ENCODE measurements at regions of chr1 and their contacts with region 1.

Region 1: GRCh38 chr1:2545759-2546514 is 10.2 kb upstream of the TNFRSF14 start:
- DNase-seq: peak; percentile 89 to 92 (median 90)
- H3K4me3 ChIP-seq: peak overlapping the region; percentile 78 to 80
- H3K4me3 Mint-ChIP-seq: peak overlapping the region; percentile 43 to 97 (median 92)
- H3K27ac ChIP-seq: peak overlapping the region; percentile 98
- H3K27ac Mint-ChIP-seq: peak overlapping the region in 6 of 7 donors; percentile 9 to 99 (median 97)
- H3K4me1 ChIP-seq: peaks cover 48% of the 10 kb centered on the region
- H3K4me1 Mint-ChIP-seq: peaks cover 8 to 39% (median 20%) of the 10 kb centered on the region in 4 donors
- H3K27me3 ChIP-seq: no peaks in the 10 kb centered on the region
- H3K27me3 Mint-ChIP-seq: peaks cover 0 to 1% of the 10 kb centered on the region in 2 donors

Region 2: DNA sequence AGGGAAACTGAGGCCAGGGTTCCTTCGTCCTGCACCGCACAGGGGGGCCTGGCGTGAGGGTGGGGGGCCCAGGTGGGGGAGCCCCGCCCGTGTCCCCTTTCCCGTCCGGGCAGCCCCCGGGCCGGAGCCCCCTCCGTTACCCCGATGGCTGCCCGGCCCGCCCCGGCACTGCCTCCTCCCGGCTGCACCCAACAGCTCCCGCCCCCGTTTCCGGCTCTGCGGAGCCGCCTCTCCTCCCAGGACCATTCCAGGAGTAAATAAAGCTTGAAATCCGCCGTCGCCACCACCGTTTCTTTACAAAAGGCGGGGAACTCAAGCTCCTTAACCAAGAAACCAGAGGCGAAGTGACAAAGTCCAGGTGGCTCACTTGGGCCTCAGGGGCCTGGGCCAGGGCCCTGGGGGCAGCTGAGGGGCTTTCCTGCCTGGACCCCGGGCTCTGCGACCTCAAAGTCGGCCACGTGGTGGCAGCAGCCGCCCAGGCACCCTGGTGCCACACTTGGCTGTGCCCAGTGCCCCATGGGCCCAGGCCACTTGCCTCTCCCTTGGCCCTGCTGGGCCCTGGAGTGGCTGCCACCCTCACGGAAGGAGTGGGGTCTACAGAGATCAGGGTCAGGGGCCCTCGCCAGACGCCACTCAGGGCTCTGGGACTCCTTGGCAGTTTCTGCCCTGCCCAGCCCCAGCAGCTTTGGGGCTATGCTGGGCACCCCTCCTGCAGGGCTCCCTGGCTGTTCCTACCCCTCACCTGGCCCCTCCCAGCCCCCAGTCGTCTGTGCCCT is 350.9 kb before region 1 on chr1:
- CTCF ChIA-PET with region 1: interaction called, 23 read pairs
- POLR2A ChIA-PET with region 1: interaction called, 10 read pairs
- intact Hi-C with region 1: loop called (anchors 1 kb)
- DNase-seq: peak; percentile 91 to 98 (median 94)
- H3K4me3 ChIP-seq: peak overlapping the region; percentile 57 to 68
- H3K4me3 Mint-ChIP-seq: peak overlapping the region; percentile 82 to 94 (median 84)
- H3K27ac ChIP-seq: peak overlapping the region; percentile 64
- H3K27ac Mint-ChIP-seq: peak overlapping the region; percentile 87 to 97 (median 92)
- H3K4me1 ChIP-seq: peaks cover 49% of the 10 kb centered on the region
- H3K4me1 Mint-ChIP-seq: peaks cover 8 to 43% (median 24%) of the 10 kb centered on the region in 4 donors
- H3K27me3 ChIP-seq: no peaks in the 10 kb centered on the region
- H3K27me3 Mint-ChIP-seq: no peaks in the 10 kb centered on the region

Region 3: DNA sequence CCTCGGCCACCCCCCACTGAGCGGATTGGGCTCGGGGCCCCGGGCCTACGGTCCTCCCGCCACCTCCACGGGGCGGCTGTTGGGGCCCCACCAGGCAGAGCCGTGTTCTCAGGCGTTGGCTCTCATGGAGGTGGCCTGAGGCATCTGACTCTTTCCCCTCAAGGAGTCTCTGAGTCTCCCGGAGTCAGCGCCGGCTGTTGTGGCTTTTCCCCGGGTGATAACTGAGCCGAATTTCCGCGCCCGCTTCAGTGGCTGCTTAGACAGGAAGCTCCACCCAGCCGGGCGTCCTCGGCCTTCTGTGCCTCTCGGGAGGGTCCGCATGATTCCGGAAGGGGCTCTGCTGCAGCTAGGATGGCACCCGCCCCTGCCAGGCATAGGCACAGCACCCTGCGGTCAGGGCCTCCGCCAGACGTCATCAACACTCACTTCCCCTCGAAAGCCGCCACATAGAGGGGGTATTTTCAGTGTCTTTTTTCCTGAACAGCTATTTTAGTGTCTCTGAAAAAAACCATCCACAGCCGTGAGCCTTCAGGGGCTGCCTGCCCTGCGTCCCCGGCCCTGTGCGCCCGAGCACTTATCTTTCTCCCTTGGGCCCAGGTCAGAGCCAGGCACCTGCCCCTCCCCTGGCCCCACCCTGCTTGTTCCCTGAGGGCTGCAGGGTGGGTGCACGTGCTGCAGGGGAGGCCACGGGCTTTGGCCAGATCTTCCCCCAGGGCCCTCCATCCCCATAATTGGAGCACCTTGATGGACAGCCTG is 244.9 kb before region 1 on chr1:
- CTCF ChIA-PET with region 1: no interaction called
- POLR2A ChIA-PET with region 1: no interaction called
- intact Hi-C with region 1: loop called (anchors 10 kb)
- DNase-seq: peak; percentile 96 to 99 (median 97)
- H3K4me3 ChIP-seq: peak overlapping the region; percentile 47 to 57
- H3K4me3 Mint-ChIP-seq: peak overlapping the region; percentile 77 to 92 (median 86)
- H3K27ac ChIP-seq: peak overlapping the region; percentile 96
- H3K27ac Mint-ChIP-seq: peak overlapping the region; percentile 99 to 100 (median 99)
- H3K4me1 ChIP-seq: peaks cover 67% of the 10 kb centered on the region
- H3K4me1 Mint-ChIP-seq: peaks cover 15 to 71% (median 46%) of the 10 kb centered on the region in 4 donors
- H3K27me3 ChIP-seq: no peaks in the 10 kb centered on the region
- H3K27me3 Mint-ChIP-seq: no peaks in the 10 kb centered on the region

Region 4: DNA sequence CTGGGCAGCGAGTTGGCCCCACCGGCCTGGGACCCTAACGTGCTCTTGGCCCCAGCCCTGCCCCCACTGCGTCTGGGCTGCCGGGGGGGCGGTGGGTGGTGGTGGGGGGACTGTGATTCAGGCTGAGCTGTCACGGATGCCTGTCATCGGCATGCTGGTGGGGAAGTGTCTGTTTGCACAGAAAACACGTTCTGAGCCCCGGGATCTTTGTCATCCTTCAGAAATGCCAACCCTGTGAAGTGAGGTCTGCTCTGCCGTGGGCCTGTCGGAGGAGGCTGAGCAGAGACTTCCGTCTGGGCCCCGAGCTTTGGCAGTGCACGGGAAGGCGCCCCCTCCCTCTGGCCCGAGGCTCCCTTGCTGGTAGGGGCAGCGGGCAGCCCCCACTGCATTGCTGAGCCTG is 94.2 kb before region 1 on chr1:
- CTCF ChIA-PET with region 1: no interaction called
- POLR2A ChIA-PET with region 1: no interaction called
- intact Hi-C with region 1: no loop called
- DNase-seq: no peak
- H3K4me3 ChIP-seq: no peak overlapping the region
- H3K4me3 Mint-ChIP-seq: no peak overlapping the region
- H3K27ac ChIP-seq: no peak overlapping the region
- H3K27ac Mint-ChIP-seq: no peak overlapping the region
- H3K4me1 ChIP-seq: no peaks in the 10 kb centered on the region
- H3K4me1 Mint-ChIP-seq: peaks cover 0 to 1% (median 0%) of the 10 kb centered on the region in 4 donors
- H3K27me3 ChIP-seq: no peaks in the 10 kb centered on the region
- H3K27me3 Mint-ChIP-seq: no peaks in the 10 kb centered on the region

Region 5: DNA sequence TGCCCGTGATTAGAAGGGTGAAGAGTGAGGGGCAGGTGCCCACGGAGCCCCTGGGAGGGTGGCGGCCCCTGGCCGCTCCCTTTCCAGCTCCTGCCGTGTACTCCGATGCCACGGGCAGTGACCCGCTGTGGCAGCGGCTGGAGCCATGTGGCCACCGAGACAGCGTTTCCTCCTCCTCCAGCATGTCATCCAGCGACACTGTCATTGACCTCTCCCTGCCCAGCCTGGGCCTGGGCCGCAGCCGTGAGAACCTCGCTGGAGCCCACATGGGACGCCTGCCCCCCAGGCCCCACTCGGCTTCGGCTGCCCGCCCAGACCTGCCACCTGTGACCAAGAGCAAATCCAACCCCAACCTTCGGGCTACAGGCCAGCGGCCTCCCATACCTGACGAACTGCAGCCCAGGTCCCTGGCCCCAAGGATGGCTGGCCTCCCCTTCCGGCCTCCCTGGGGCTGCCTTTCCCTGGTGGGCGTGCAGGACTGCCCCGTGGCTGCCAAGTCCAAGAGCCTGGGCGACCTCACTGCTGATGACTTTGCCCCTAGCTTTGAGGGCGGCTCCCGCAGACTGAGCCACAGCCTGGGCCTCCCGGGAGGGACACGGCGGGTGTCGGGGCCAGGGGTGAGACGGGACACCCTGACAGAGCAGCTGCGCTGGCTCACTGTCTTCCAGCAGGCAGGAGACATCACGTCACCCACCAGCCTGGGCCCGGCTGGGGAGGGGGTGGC is 41.5 kb before region 1 on chr1:
- CTCF ChIA-PET with region 1: no interaction called
- POLR2A ChIA-PET with region 1: interaction called, 12 read pairs
- intact Hi-C with region 1: no loop called
- DNase-seq: no peak
- H3K4me3 ChIP-seq: no peak overlapping the region
- H3K4me3 Mint-ChIP-seq: no peak overlapping the region
- H3K27ac ChIP-seq: no peak overlapping the region
- H3K27ac Mint-ChIP-seq: no peak overlapping the region
- H3K4me1 ChIP-seq: peaks cover 11% of the 10 kb centered on the region
- H3K4me1 Mint-ChIP-seq: peaks cover 5 to 13% (median 8%) of the 10 kb centered on the region in 4 donors
- H3K27me3 ChIP-seq: no peaks in the 10 kb centered on the region
- H3K27me3 Mint-ChIP-seq: no peaks in the 10 kb centered on the region

Region 6: DNA sequence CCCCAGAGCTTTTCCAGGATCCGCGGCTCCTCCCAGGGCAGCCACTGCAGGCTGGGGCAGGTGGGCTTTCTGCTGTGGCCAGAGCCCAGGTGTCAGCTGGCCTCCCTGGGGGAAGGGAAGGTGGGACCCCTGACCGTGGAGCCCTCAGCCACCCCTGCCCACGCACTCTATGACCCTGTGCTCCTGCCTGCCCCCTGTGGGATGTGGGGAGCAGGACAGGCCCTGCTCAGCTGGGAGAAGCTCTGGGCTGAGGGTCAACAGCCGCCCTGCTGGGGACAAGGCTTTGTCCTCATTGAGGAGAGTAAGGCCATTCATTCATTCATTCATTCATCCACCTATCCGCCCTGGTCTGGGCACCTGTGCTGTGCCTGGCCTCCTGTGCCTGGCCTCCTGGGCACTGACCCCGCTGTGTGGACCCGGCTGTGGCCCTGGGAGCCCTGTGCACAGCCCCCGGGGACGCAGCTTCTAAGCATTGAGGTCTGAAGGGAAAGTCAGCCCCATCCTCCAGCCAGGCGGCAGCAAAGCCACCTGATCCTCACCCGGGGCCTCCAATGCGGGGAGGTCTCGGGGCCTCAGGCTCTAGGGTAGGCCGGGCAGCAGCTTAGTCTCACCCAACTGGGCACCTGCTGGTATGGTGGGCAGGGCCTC is 16.1 kb after region 1 on chr1:
- CTCF ChIA-PET with region 1: interaction called, 18 read pairs
- POLR2A ChIA-PET with region 1: interaction called, 108 read pairs
- intact Hi-C with region 1: no loop called
- DNase-seq: no peak
- H3K4me3 ChIP-seq: no peak overlapping the region
- H3K4me3 Mint-ChIP-seq: no peak overlapping the region
- H3K27ac ChIP-seq: peak overlapping the region; percentile 15
- H3K27ac Mint-ChIP-seq: peak overlapping the region in 2 of 7 donors; percentile 35 to 40
- H3K4me1 ChIP-seq: peaks cover 23% of the 10 kb centered on the region
- H3K4me1 Mint-ChIP-seq: peaks cover 0 to 23% (median 10%) of the 10 kb centered on the region in 4 donors
- H3K27me3 ChIP-seq: no peaks in the 10 kb centered on the region
- H3K27me3 Mint-ChIP-seq: no peaks in the 10 kb centered on the region

Region 7: GRCh38 chr1:2611031-2611501 is 65.1 kb after region 1 on chr1:
- CTCF ChIA-PET with region 1: no interaction called
- POLR2A ChIA-PET with region 1: no interaction called
- intact Hi-C with region 1: no loop called
- DNase-seq: no peak
- H3K4me3 ChIP-seq: no peak overlapping the region
- H3K4me3 Mint-ChIP-seq: no peak overlapping the region
- H3K27ac ChIP-seq: no peak overlapping the region
- H3K27ac Mint-ChIP-seq: no peak overlapping the region
- H3K4me1 ChIP-seq: no peaks in the 10 kb centered on the region
- H3K4me1 Mint-ChIP-seq: no peaks in the 10 kb centered on the region
- H3K27me3 ChIP-seq: no peaks in the 10 kb centered on the region
- H3K27me3 Mint-ChIP-seq: peaks cover 4 to 5% of the 10 kb centered on the region in 2 donors

Region 8: GRCh38 chr1:2642560-2643413 is 96.8 kb after region 1 on chr1:
- CTCF ChIA-PET with region 1: interaction called, 4 read pairs
- POLR2A ChIA-PET with region 1: interaction called, 11 read pairs
- intact Hi-C with region 1: no loop called
- DNase-seq: peak; percentile 95 to 96 (median 95)
- H3K4me3 ChIP-seq: peak overlapping the region; percentile 69 to 83
- H3K4me3 Mint-ChIP-seq: peak overlapping the region; percentile 85 to 94 (median 88)
- H3K27ac ChIP-seq: peak overlapping the region; percentile 99
- H3K27ac Mint-ChIP-seq: peak overlapping the region; percentile 85 to 99 (median 96)
- H3K4me1 ChIP-seq: peaks cover 16% of the 10 kb centered on the region
- H3K4me1 Mint-ChIP-seq: peaks cover 2 to 21% (median 10%) of the 10 kb centered on the region in 4 donors
- H3K27me3 ChIP-seq: no peaks in the 10 kb centered on the region
- H3K27me3 Mint-ChIP-seq: no peaks in the 10 kb centered on the region

Measured in CD4-positive, alpha-beta memory T cell (primary cell).